Caco-2 (cell line): ENCODE measurements at regions of chr2 and their contacts with region 1.

Region 1: GRCh38 chr2:112481050-112481527 is 867 bp upstream of the TTL start:
- DNase-seq: peak; percentile 85 to 89
- H3K4me3 ChIP-seq: peak overlapping the region; percentile 55
- H3K4me3 Mint-ChIP-seq: peak overlapping the region; percentile 89
- H3K27ac Mint-ChIP-seq: peak overlapping the region; percentile 40
- H3K4me1 ChIP-seq: peaks cover 5% of the 10 kb centered on the region; the same call in 1 of the 2 replicates
- H3K4me1 Mint-ChIP-seq: peaks cover 11% of the 10 kb centered on the region
- H3K27me3 ChIP-seq: no peaks in the 10 kb centered on the region
- H3K27me3 Mint-ChIP-seq: no peaks in the 10 kb centered on the region
- CTCF ChIP-seq: peak; percentile 60 to 94

Region 2: GRCh38 chr2:112254466-112255239 is 226.4 kb before region 1 on chr2 and contains the start of gene ZC3H8:
- CTCF ChIA-PET with region 1: interaction called, 3 read pairs
- POLR2A ChIA-PET with region 1: no interaction called
- intact Hi-C with region 1: loop called (anchors 5 kb)
- DNase-seq: peak; percentile 94 to 97
- H3K4me3 ChIP-seq: peak within 1 kb of the TSS; percentile 91
- H3K4me3 Mint-ChIP-seq: peak within 1 kb of the TSS; percentile 78
- H3K27ac Mint-ChIP-seq: peak within 1 kb of the TSS; percentile 63
- H3K4me1 ChIP-seq: peaks cover 10% of the 10 kb centered on the region; the same call in 1 of the 2 replicates
- H3K4me1 Mint-ChIP-seq: peaks cover 4% of the 10 kb centered on the region
- H3K27me3 ChIP-seq: no peaks in the 10 kb centered on the region
- H3K27me3 Mint-ChIP-seq: no peaks in the 10 kb centered on the region
- CTCF ChIP-seq: no peak
- total RNA-seq, gene ZC3H8: 17.6 and 19.9 TPM in 2 replicates

Region 3: DNA sequence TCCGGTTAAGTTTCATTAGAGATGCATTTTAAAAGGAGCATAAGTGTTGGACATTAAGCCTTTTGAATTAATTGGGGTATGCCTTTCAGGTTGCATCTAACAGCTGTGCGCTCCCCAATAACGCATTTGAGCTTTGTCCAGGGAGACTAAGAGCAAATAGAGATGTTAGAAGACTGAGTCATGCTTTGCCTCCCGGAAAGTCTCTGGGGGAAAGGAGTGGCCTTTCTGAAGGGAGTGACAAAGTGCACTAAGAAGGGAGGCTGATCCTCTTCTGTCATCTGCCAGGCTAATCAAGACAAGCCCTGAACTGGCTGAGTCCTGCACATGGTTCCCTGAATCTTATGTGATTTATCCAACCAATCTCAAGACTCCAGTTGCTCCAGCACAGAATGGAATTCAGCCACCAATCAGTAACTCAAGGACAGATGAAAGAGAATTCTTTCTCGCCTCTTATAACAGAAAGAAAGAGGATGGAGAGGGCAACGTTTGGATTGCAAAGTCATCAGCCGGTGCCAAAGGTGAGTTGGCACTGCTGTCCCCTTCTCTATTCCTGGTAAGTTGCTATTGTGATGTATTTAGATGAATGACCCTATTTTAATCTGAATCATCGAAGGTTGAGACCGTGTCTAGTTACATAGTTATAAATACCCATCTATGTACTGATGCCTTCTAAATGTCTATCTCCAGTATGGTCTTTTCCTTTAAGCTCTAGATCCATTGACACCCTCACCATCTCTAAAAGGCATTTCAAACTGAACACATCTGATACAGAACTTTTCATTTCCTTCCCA is 13.0 kb after region 1 on chr2:
- CTCF ChIA-PET with region 1: interaction called, 6 read pairs
- POLR2A ChIA-PET with region 1: no interaction called
- intact Hi-C with region 1: loop called (anchors 1 kb)
- DNase-seq: peak; percentile 43 to 53
- H3K4me3 ChIP-seq: no peak overlapping the region
- H3K4me3 Mint-ChIP-seq: no peak overlapping the region
- H3K27ac Mint-ChIP-seq: no peak overlapping the region
- H3K4me1 ChIP-seq: peaks cover 15% of the 10 kb centered on the region
- H3K4me1 Mint-ChIP-seq: no peaks in the 10 kb centered on the region
- H3K27me3 ChIP-seq: no peaks in the 10 kb centered on the region
- H3K27me3 Mint-ChIP-seq: no peaks in the 10 kb centered on the region
- CTCF ChIP-seq: no peak

Region 4: GRCh38 chr2:112542123-112542983 is 61.3 kb after region 1 on chr2 and contains the start of gene POLR1B:
- CTCF ChIA-PET with region 1: no interaction called
- POLR2A ChIA-PET with region 1: no interaction called
- intact Hi-C with region 1: loop called (anchors 1 kb)
- DNase-seq: peak; percentile 92 to 93
- H3K4me3 ChIP-seq: peak within 1 kb of the TSS; percentile 89
- H3K4me3 Mint-ChIP-seq: no peak within 1 kb of the TSS
- H3K27ac Mint-ChIP-seq: no peak within 1 kb of the TSS
- H3K4me1 ChIP-seq: peaks cover 10% of the 10 kb centered on the region; the same call in 1 of the 2 replicates
- H3K4me1 Mint-ChIP-seq: no peaks in the 10 kb centered on the region
- H3K27me3 ChIP-seq: no peaks in the 10 kb centered on the region
- H3K27me3 Mint-ChIP-seq: no peaks in the 10 kb centered on the region
- CTCF ChIP-seq: peak in 1 of 2 experiments; percentile 24
- total RNA-seq, gene POLR1B: 38.3 and 42.2 TPM in 2 replicates

Region 5: GRCh38 chr2:112579241-112579640 is 98.2 kb after region 1 on chr2:
- CTCF ChIA-PET with region 1: interaction called, 11 read pairs
- POLR2A ChIA-PET with region 1: no interaction called
- intact Hi-C with region 1: loop called (anchors 1 kb)
- DNase-seq: no peak
- H3K4me3 ChIP-seq: no peak overlapping the region
- H3K4me3 Mint-ChIP-seq: no peak overlapping the region
- H3K27ac Mint-ChIP-seq: no peak overlapping the region
- H3K4me1 ChIP-seq: peaks cover 5% of the 10 kb centered on the region
- H3K4me1 Mint-ChIP-seq: no peaks in the 10 kb centered on the region
- H3K27me3 ChIP-seq: no peaks in the 10 kb centered on the region
- H3K27me3 Mint-ChIP-seq: no peaks in the 10 kb centered on the region
- CTCF ChIP-seq: no peak

Region 6: GRCh38 chr2:112584134-112584890 is 103.2 kb after region 1 on chr2 and contains the start of gene CHCHD5:
- CTCF ChIA-PET with region 1: interaction called, 5 read pairs
- POLR2A ChIA-PET with region 1: no interaction called
- intact Hi-C with region 1: loop called (anchors 1 kb)
- DNase-seq: peak; percentile 95 to 96
- H3K4me3 ChIP-seq: peak within 1 kb of the TSS; percentile 67
- H3K4me3 Mint-ChIP-seq: peak within 1 kb of the TSS; percentile 80
- H3K27ac Mint-ChIP-seq: peak within 1 kb of the TSS; percentile 97
- H3K4me1 ChIP-seq: peaks cover 13% of the 10 kb centered on the region
- H3K4me1 Mint-ChIP-seq: peaks cover 8% of the 10 kb centered on the region
- H3K27me3 ChIP-seq: no peaks in the 10 kb centered on the region
- H3K27me3 Mint-ChIP-seq: no peaks in the 10 kb centered on the region
- CTCF ChIP-seq: no peak
- total RNA-seq, gene CHCHD5: 50.7 and 56.0 TPM in 2 replicates